Dorsolateral prefrontal cortex (tissue), 120 donors: ENCODE measurements at regions of chr4 and their contacts with region 1.

Region 1: GRCh38 chr4:22237155-22237751 is 278.6 kb downstream of the ADGRA3 start:
- DNase-seq: peak in 1 of 10 donors; percentile 29
- H3K4me3 ChIP-seq: peak overlapping the region in 2 of 59 donors; percentile 3 to 46
- H3K27ac ChIP-seq: no peak overlapping the region
- H3K27me3 ChIP-seq: peaks cover 0 to 4% (median 0%) of the 10 kb centered on the region in 45 donors
- CTCF ChIP-seq: peak in 54 of 56 donors; percentile 10 to 60 (median 43)

Region 2: GRCh38 chr4:22356987-22357596 is 119.8 kb after region 1 on chr4:
- intact Hi-C with region 1: loop called in 1 of 2 experiments (anchors 10 kb)
- DNase-seq: no peak
- H3K4me3 ChIP-seq: no peak overlapping the region
- H3K27ac ChIP-seq: no peak overlapping the region
- H3K27me3 ChIP-seq: no peaks in the 10 kb centered on the region
- CTCF ChIP-seq: peak in 53 of 56 donors; percentile 12 to 59 (median 42)